Right ventricle myocardium inferior (tissue), 1 donor: ENCODE measurements at regions of chr11 and their contacts with region 1.

Region 1: DNA sequence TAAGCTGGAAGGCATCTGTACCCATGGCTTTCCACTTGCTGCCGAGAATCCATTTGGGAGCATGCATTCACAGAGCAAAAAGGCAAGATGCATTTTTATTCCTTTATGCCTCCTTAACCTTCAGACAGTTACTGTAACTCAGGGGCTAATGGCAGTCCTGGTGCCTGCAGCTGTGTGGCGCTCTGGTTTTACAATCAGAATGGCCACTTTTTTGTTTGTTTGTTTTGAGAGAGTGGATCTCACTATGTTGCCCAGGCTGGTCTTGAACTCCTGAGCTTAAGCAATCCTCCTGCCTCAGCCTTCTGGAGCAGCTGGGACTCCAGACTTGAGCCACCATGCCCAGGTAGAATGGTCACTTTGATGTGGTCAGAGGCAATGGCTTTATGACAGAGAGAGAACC is 101.8 kb downstream of the NAV2 start:
- DNase-seq: no peak
- ATAC-seq: no peak

Region 2: GRCh38 chr11:19846654-19847305 is 32.4 kb after region 1 on chr11:
- intact Hi-C with region 1: loop called (anchors 5 kb)
- DNase-seq: no peak
- ATAC-seq: peak; percentile 82

Region 3: GRCh38 chr11:19903620-19904069 is 89.2 kb after region 1 on chr11:
- intact Hi-C with region 1: loop called (anchors 2 kb)
- DNase-seq: no peak
- ATAC-seq: no peak